ENCODE measurements at regions of chr3 and their contacts with region 1.

Region 1: GRCh38 chr3:97821810-97822775 is at the start of gene CRYBG3:
- DNase-seq: peak; percentile 91 to 94
- ATAC-seq: peak; percentile 98
- H3K4me3 ChIP-seq: peak within 1 kb of the TSS; percentile 49 to 91
- H3K27ac ChIP-seq: peak within 1 kb of the TSS; percentile 14 to 23
- H3K4me1 ChIP-seq: peaks cover 0 to 3% of the 10 kb centered on the region in 2 donors
- H3K27me3 ChIP-seq: no peaks in the 10 kb centered on the region
- total RNA-seq, gene CRYBG3: 22.4 to 39.1 TPM

Region 2: DNA sequence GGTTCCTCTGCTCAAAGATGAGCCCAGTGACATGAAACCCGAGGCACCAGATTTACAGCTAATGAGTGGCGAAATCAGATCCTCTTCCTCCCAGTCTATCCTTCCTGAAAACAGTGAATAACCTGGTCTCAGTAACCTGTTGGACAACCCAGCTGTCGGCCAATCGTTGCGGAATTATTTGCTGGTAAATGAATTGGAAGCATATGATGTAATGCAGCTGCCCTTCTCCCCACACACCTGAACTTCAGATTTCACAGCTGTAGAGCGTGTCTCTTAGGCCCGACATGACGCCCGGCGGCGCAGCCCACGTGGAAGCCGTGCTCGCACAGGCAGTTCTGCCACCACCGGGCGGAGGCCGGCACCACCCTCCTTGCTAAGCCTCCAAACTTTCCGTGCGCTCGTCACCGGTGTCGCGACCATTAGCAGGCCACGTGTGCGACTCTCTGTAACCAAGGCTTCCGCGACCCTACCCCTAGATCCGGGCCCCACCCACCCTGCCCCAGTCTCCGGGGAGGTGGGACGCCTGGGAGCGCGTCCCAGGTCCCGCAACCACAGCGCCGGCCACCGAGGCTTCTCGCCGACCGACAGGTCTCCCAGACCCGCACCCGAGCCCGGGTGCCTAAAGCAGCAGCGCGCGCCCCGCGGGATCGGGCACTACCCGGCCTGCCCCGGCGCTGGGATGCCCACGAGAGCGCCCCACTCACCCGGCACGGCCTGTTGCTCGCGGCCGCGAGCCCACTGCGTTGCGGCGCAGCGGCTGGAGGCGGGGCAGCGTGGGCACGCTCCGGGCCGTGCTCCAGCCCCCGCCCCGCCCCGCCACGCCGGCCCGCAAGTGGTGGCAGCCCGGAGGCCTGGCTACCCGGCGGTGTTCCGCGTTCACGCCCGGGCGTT is 149.8 kb after region 1 on chr3 and contains the start of gene RIOX2:
- intact Hi-C with region 1: loop called (anchors 5 kb)
- DNase-seq: peak; percentile 85 to 92
- ATAC-seq: peak; percentile 92
- H3K4me3 ChIP-seq: peak within 1 kb of the TSS; percentile 51 to 62
- H3K27ac ChIP-seq: peak within 1 kb of the TSS in 1 of 2 donors; percentile 45
- H3K4me1 ChIP-seq: peaks cover 0 to 2% of the 10 kb centered on the region in 2 donors
- H3K27me3 ChIP-seq: no peaks in the 10 kb centered on the region
- total RNA-seq, gene RIOX2: 15.7 to 25.8 TPM